Naive thymus-derived CD4-positive, alpha-beta T cell (primary cell): ENCODE measurements at regions of chr1 and their contacts with region 1.

Region 1: DNA sequence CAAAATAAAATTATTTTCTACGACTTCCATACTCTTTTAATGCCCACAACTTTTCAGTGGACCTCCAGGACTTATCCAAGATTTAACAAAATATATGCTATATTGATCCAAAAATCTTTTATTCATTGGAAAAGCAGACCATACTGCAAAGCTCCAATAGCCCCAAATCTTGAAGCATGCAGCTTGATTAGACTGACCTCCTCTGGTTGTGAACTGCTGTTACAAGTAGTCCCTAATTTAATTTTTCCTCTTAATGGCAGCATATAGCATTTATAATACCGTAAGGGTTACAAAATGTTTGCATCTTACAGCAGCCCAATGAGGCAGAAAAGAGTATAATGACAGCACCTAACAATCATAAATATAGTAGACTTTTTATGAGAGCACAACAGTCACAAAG is 49.8 kb downstream of the TPR start:
- DNase-seq: peak in 5 of 9 donors; percentile 31 to 60 (median 45)
- ATAC-seq: peak; percentile 75
- H3K4me3 ChIP-seq: no peak overlapping the region
- H3K4me3 Mint-ChIP-seq: peak overlapping the region in 2 of 10 donors; percentile 22 to 33
- H3K27ac ChIP-seq: no peak overlapping the region
- H3K27ac Mint-ChIP-seq: peak overlapping the region in 6 of 9 donors; percentile 28 to 87 (median 66)
- H3K4me1 ChIP-seq: peaks cover 0 to 6% of the 10 kb centered on the region in 2 donors
- H3K4me1 Mint-ChIP-seq: peaks cover 10 to 47% (median 31%) of the 10 kb centered on the region in 7 donors
- H3K27me3 ChIP-seq: no peaks in the 10 kb centered on the region
- H3K27me3 Mint-ChIP-seq: no peaks in the 10 kb centered on the region

Region 2: GRCh38 chr1:185520188-185520935 is 804.9 kb before region 1 on chr1:
- CTCF ChIA-PET with region 1: no interaction called
- POLR2A ChIA-PET with region 1: no interaction called
- intact Hi-C with region 1: no loop called
- DNase-seq: no peak
- ATAC-seq: peak; percentile 81
- H3K4me3 ChIP-seq: no peak overlapping the region
- H3K4me3 Mint-ChIP-seq: no peak overlapping the region
- H3K27ac ChIP-seq: no peak overlapping the region
- H3K27ac Mint-ChIP-seq: no peak overlapping the region
- H3K4me1 ChIP-seq: no peaks in the 10 kb centered on the region
- H3K4me1 Mint-ChIP-seq: peaks cover 0 to 5% (median 0%) of the 10 kb centered on the region in 7 donors
- H3K27me3 ChIP-seq: no peaks in the 10 kb centered on the region
- H3K27me3 Mint-ChIP-seq: peaks cover 0 to 3% (median 0%) of the 10 kb centered on the region in 5 donors

Region 3: GRCh38 chr1:185813401-185813979 is 511.7 kb before region 1 on chr1:
- CTCF ChIA-PET with region 1: no interaction called
- POLR2A ChIA-PET with region 1: no interaction called
- intact Hi-C with region 1: loop called in 1 of 2 experiments (anchors 2 kb)
- DNase-seq: peak in 5 of 9 donors; percentile 5 to 15 (median 10)
- ATAC-seq: peak; percentile 50
- H3K4me3 ChIP-seq: no peak overlapping the region
- H3K4me3 Mint-ChIP-seq: no peak overlapping the region
- H3K27ac ChIP-seq: no peak overlapping the region
- H3K27ac Mint-ChIP-seq: no peak overlapping the region
- H3K4me1 ChIP-seq: no peaks in the 10 kb centered on the region
- H3K4me1 Mint-ChIP-seq: no peaks in the 10 kb centered on the region
- H3K27me3 ChIP-seq: no peaks in the 10 kb centered on the region
- H3K27me3 Mint-ChIP-seq: peaks cover 3 to 13% (median 8%) of the 10 kb centered on the region in 5 donors

Region 4: DNA sequence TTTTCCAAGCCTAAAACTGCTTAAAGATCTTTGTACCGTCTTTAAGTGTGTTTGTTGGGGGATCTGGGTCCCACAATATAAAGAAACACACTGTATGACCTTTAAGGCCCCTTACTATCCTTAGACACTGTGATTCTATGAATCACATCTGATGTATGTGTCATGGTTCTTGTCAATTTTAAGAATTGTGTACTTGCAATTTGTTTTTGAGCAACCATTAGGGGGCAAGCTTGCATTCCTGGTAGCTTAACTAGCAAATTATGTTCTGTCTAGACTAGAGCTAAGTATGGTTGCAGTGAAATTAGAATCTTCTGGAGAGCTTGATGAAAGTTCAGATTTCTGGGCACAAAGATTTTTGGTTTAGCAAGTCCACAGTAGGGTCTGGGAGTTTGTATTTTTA is 169.6 kb before region 1 on chr1:
- CTCF ChIA-PET with region 1: interaction called, 6 read pairs
- POLR2A ChIA-PET with region 1: no interaction called
- intact Hi-C with region 1: loop called (anchors 1 to 2 kb)
- DNase-seq: peak in 3 of 9 donors; percentile 2 to 4 (median 2)
- ATAC-seq: peak; percentile 37
- H3K4me3 ChIP-seq: no peak overlapping the region
- H3K4me3 Mint-ChIP-seq: no peak overlapping the region
- H3K27ac ChIP-seq: no peak overlapping the region
- H3K27ac Mint-ChIP-seq: no peak overlapping the region
- H3K4me1 ChIP-seq: no peaks in the 10 kb centered on the region
- H3K4me1 Mint-ChIP-seq: no peaks in the 10 kb centered on the region
- H3K27me3 ChIP-seq: no peaks in the 10 kb centered on the region
- H3K27me3 Mint-ChIP-seq: peaks cover 4 to 13% (median 8%) of the 10 kb centered on the region in 5 donors

Region 5: GRCh38 chr1:186272486-186272885 is 52.8 kb before region 1 on chr1:
- CTCF ChIA-PET with region 1: interaction called, 42 read pairs
- POLR2A ChIA-PET with region 1: interaction called, 6 read pairs
- intact Hi-C with region 1: loop called (anchors 1 kb)
- DNase-seq: peak in 5 of 9 donors; percentile 36 to 55 (median 46)
- ATAC-seq: peak; percentile 50
- H3K4me3 ChIP-seq: no peak overlapping the region
- H3K4me3 Mint-ChIP-seq: no peak overlapping the region
- H3K27ac ChIP-seq: no peak overlapping the region
- H3K27ac Mint-ChIP-seq: peak overlapping the region in 2 of 9 donors; percentile 45 to 74
- H3K4me1 ChIP-seq: no peaks in the 10 kb centered on the region
- H3K4me1 Mint-ChIP-seq: peaks cover 6 to 24% (median 20%) of the 10 kb centered on the region in 7 donors
- H3K27me3 ChIP-seq: no peaks in the 10 kb centered on the region
- H3K27me3 Mint-ChIP-seq: peaks cover 0 to 11% (median 0%) of the 10 kb centered on the region in 5 donors

Region 6: GRCh38 chr1:186283374-186283773 is 41.9 kb before region 1 on chr1:
- CTCF ChIA-PET with region 1: interaction called, 7 read pairs
- POLR2A ChIA-PET with region 1: interaction called, 6 read pairs
- intact Hi-C with region 1: loop called in 1 of 2 experiments (anchors 2 kb)
- DNase-seq: no peak
- ATAC-seq: no peak
- H3K4me3 ChIP-seq: no peak overlapping the region
- H3K4me3 Mint-ChIP-seq: peak overlapping the region in 3 of 10 donors; percentile 29 to 57 (median 35)
- H3K27ac ChIP-seq: no peak overlapping the region
- H3K27ac Mint-ChIP-seq: peak overlapping the region in 4 of 9 donors; percentile 8 to 89 (median 87)
- H3K4me1 ChIP-seq: peaks cover 0 to 12% of the 10 kb centered on the region in 2 donors
- H3K4me1 Mint-ChIP-seq: peaks cover 19 to 48% (median 39%) of the 10 kb centered on the region in 7 donors
- H3K27me3 ChIP-seq: no peaks in the 10 kb centered on the region
- H3K27me3 Mint-ChIP-seq: peaks cover 0 to 3% (median 0%) of the 10 kb centered on the region in 5 donors

Region 7: DNA sequence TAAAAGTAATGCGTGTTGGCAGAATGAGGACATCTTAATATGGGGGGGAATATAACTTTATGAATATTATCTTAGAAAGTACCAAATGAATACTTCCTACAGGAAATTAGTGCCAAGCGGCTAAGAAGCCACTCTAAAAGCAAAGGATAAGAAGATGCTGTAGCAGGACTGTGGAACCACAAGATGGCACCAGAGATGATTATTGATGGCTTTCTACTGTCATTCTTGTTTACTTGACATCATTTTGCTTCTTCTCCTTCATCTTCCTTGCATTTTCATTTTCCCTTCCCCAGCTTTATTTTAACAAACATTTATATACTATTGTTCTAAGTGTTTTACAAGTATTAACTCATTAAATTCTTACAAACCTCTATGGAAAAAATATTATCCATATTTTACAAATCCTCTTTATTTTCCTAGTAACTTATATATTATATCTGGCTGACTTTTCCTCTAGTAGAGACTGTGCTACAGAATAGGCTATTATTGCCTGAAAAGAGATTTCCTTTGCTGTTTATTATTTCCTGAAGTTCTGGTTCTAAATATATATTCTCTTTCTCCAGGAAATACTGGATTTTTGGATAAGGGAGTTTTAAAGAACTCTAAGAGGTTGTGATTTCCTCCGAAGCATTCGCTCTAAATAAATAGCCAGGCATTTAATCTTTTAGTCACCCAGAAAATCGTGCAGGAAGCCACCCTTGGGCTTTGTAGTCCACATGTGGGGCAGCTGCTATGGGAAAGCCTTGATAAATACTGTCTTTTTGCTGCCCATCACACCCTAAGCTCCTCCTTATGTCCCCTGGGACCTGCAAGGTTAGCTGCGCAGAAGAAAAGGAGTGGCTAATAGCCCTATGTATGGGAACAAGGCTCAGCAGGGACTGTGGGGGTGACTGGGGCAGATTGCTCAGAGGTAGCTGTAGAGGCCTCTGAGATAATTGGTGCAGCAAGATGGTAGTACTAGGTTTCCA is 20.0 kb before region 1 on chr1:
- CTCF ChIA-PET with region 1: interaction called, 22 read pairs
- POLR2A ChIA-PET with region 1: interaction called, 10 read pairs
- intact Hi-C with region 1: loop called (anchors 1 kb)
- DNase-seq: peak in 6 of 9 donors; percentile 34 to 51 (median 42)
- ATAC-seq: peak; percentile 39
- H3K4me3 ChIP-seq: no peak overlapping the region
- H3K4me3 Mint-ChIP-seq: peak overlapping the region in 9 of 10 donors; percentile 2 to 76 (median 45)
- H3K27ac ChIP-seq: peak overlapping the region; percentile 58
- H3K27ac Mint-ChIP-seq: peak overlapping the region; percentile 82 to 95 (median 91)
- H3K4me1 ChIP-seq: peaks cover 3 to 83% of the 10 kb centered on the region in 2 donors
- H3K4me1 Mint-ChIP-seq: peaks cover 35 to 66% (median 56%) of the 10 kb centered on the region in 7 donors
- H3K27me3 ChIP-seq: no peaks in the 10 kb centered on the region
- H3K27me3 Mint-ChIP-seq: no peaks in the 10 kb centered on the region

Region 8: DNA sequence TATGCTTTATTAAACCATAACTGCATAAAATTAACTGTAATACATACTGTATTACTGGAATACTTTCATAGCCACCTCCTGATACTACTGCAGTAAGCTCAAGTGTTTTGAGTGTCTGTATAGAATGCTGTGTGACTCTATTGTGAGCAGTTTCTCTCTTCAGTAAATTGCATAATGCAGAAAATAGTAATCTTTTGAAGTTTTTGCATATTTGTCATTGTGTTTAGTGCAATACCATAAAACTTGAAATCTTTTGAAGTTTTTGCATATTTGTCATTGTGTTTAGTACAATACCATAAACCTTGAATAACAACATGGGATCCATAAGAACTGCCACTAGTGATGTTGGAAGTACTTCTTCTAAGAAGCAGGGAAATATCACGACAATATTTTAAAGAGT is 38.7 kb after region 1 on chr1:
- CTCF ChIA-PET with region 1: no interaction called
- POLR2A ChIA-PET with region 1: no interaction called
- intact Hi-C with region 1: loop called in 1 of 2 experiments (anchors 5 kb)
- DNase-seq: no peak
- ATAC-seq: no peak
- H3K4me3 ChIP-seq: no peak overlapping the region
- H3K4me3 Mint-ChIP-seq: no peak overlapping the region
- H3K27ac ChIP-seq: no peak overlapping the region
- H3K27ac Mint-ChIP-seq: no peak overlapping the region
- H3K4me1 ChIP-seq: no peaks in the 10 kb centered on the region
- H3K4me1 Mint-ChIP-seq: peaks cover 4 to 31% (median 16%) of the 10 kb centered on the region in 7 donors
- H3K27me3 ChIP-seq: no peaks in the 10 kb centered on the region
- H3K27me3 Mint-ChIP-seq: no peaks in the 10 kb centered on the region

Region 9: DNA sequence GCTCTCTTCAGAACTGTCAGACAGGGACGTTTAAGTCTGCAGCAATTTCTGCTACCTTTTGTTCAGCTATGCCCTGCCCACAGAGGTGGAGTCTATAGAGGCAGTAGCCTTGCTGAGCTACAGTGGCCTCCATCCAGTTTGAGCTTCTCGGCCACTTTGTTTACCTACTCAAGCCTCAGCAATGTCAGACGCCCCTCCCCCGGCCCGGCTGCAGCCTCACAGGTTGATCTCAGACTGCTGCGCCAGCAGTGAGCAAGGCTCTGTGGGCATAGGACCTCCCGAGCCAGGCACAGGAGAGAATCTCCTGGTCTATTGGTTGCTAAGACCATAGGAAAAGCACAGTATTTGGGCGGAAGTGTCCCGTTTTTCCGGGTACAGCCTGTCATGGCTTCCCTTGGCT is 225.6 kb after region 1 on chr1:
- CTCF ChIA-PET with region 1: no interaction called
- POLR2A ChIA-PET with region 1: no interaction called
- intact Hi-C with region 1: no loop called
- DNase-seq: no peak
- ATAC-seq: no peak
- H3K4me3 ChIP-seq: no peak overlapping the region
- H3K4me3 Mint-ChIP-seq: no peak overlapping the region
- H3K27ac ChIP-seq: no peak overlapping the region
- H3K27ac Mint-ChIP-seq: no peak overlapping the region
- H3K4me1 ChIP-seq: no peaks in the 10 kb centered on the region
- H3K4me1 Mint-ChIP-seq: no peaks in the 10 kb centered on the region
- H3K27me3 ChIP-seq: no peaks in the 10 kb centered on the region
- H3K27me3 Mint-ChIP-seq: peaks cover 0 to 9% (median 0%) of the 10 kb centered on the region in 5 donors